BJ (cell line): ENCODE measurements at regions of chr11 and their contacts with region 1.

Region 1: GRCh38 chr11:36509694-36510566 is at the start of gene TRAF6:
- DNase-seq: no peak
- H3K4me3 ChIP-seq: peak within 1 kb of the TSS; percentile 100
- H3K27me3 ChIP-seq: no peaks in the 10 kb centered on the region
- CTCF ChIP-seq: peak; percentile 80
- polyA plus RNA-seq, gene TRAF6: 6.2 and 9.0 TPM in 2 replicates

Region 2: DNA sequence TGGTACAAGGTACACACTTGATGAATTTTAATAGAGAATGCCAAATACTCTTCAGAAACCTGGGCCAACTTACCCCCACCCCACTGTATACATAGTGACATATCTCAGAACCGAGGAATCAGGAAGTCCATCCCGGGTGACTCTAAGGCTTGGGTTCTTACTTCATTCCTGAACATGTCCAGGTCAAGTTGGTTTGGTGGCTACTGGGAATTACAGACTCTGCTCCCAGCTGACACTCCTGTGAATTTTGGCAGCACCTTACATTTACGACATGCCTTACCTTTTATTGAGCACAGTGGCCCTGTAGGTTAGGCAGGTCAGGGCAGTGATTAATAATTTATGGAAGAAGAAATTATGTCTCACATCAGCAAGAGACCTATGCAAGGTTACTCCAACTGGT is 636.2 kb before region 1 on chr11:
- CTCF ChIA-PET with region 1: no interaction called
- POLR2A ChIA-PET with region 1: no interaction called
- DNase-seq: no peak
- H3K4me3 ChIP-seq: no peak overlapping the region
- H3K27me3 ChIP-seq: peaks cover 1% of the 10 kb centered on the region
- CTCF ChIP-seq: no peak

Region 3: DNA sequence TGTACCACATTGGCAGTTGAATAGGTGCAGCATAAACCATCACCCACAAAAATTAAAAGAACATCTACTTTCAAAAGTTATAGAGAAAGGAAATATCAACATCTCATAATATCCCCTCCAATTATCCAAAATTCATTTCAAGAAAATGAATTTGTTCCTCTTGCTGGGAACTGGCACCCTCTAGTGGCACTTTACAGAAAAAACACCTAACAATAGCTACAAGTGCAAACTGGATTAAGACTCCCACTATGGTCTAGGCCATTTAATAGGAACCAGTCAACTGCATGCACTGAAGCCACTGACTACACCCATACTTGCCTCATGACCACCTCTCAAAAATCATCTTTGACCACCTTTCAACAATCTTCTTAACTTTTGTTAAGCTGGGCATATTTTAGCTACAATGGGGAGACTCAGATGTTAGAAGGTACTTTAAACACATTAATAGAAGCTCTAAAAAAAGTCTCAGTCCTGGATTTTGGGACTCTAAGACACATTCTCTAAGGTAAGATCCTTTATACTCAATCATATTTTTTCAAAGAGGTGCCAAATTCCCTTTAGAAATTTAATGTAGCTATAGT is 17.1 kb before region 1 on chr11:
- CTCF ChIA-PET with region 1: interaction called, 15 read pairs
- POLR2A ChIA-PET with region 1: no interaction called
- DNase-seq: no peak
- H3K4me3 ChIP-seq: no peak overlapping the region
- H3K27me3 ChIP-seq: no peaks in the 10 kb centered on the region
- CTCF ChIP-seq: peak; percentile 78